ENCODE measurements at regions of chr2 and their contacts with region 1.

Region 1: DNA sequence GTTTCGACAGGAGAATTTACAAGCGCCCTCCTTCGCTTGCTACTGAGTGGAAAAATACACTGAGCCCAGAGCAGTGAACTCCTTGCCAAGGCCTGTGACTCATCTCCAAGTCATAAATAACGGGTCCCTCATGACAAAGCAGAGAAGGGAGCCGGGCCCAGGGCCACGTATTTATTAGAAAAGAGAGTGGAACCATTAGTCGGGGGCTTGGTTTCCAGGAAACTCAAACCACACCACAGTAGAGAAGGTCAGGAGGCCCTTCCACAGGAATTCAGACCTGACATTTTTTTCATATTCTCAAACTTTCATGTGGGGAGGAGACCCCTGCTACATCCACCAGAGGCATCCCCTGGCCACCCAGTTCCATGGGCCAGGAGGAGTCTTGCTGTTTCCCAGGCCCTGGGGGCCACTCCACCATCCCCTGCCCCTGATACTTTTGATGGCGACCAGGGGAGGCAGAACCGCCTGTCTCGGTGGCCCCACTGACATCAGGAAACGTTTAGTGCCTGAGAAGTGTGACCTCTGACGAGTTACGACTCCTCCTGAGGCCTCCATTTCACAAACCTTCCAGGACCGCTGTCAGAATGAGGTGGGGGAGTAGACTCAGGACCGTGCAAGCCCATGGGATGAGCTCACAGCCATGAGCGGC is 289.7 kb downstream of the DYSF start:
- DNase-seq: peak; percentile 96
- H3K4me3 ChIP-seq: no peak overlapping the region
- H3K27ac ChIP-seq: peak overlapping the region; percentile 64 to 77 (median 72)
- H3K4me1 ChIP-seq: peaks cover 0 to 60% (median 47%) of the 10 kb centered on the region in 4 donors
- H3K27me3 ChIP-seq: no peaks in the 10 kb centered on the region
- CTCF ChIP-seq: no peak
- EP300 ChIP-seq: peak in 2 of 4 donors; percentile 52 to 64
- POLR2A ChIP-seq: no peak

Region 2: GRCh38 chr2:71668326-71669057 is 74.6 kb before region 1 on chr2:
- intact Hi-C with region 1: loop called (anchors 10 kb)
- DNase-seq: peak; percentile 46
- H3K4me3 ChIP-seq: no peak overlapping the region
- H3K27ac ChIP-seq: no peak overlapping the region
- H3K4me1 ChIP-seq: peaks cover 0 to 14% (median 9%) of the 10 kb centered on the region in 4 donors
- H3K27me3 ChIP-seq: no peaks in the 10 kb centered on the region
- CTCF ChIP-seq: no peak
- EP300 ChIP-seq: no peak
- POLR2A ChIP-seq: no peak

Region 3: DNA sequence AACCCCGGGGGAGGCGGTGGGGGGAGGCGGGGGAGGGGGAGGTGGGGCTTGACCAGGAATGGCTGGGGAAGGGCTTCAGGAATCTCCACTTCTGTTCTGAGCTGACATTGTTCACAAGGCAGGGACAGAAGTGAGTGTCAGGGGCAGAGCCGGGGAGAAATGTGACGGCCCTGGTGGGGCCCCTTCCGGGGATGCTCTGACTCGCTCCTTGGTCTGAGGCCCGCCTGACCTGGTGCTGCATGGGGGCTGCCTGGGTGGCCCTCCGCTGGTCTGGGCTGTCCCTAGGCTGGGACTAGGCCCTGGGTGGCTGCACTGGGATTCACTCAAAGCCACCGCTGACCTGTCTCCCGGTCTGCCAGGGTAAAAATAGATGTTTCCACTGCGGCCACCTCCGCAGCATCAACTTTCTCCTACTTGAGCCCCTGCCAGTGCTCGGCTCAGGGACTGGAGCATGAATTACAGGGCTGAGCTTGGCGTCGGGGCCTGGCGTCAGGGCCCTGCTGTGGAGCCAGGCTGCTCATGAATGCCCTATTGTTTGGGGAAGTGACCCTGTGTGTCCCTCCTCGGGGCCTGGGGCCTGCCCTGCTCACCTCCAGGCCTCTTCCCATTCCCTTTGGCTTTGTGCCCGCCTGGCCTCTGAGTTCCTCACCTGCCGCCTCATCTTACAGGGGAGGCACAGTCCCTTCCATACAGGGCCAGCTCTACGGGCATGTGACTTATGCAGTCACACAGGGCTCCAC is 42.2 kb before region 1 on chr2:
- intact Hi-C with region 1: loop called (anchors 2 kb)
- DNase-seq: peak; percentile 92
- H3K4me3 ChIP-seq: no peak overlapping the region
- H3K27ac ChIP-seq: peak overlapping the region; percentile 47 to 82 (median 55)
- H3K4me1 ChIP-seq: peaks cover 0 to 25% (median 21%) of the 10 kb centered on the region in 4 donors
- H3K27me3 ChIP-seq: no peaks in the 10 kb centered on the region
- CTCF ChIP-seq: no peak
- EP300 ChIP-seq: no peak
- POLR2A ChIP-seq: no peak

Measured in sigmoid colon (tissue), 7 donors.